Endothelial cell of umbilical vein (primary cell): ENCODE measurements at regions of chr6 and their contacts with region 1.

Region 1: DNA sequence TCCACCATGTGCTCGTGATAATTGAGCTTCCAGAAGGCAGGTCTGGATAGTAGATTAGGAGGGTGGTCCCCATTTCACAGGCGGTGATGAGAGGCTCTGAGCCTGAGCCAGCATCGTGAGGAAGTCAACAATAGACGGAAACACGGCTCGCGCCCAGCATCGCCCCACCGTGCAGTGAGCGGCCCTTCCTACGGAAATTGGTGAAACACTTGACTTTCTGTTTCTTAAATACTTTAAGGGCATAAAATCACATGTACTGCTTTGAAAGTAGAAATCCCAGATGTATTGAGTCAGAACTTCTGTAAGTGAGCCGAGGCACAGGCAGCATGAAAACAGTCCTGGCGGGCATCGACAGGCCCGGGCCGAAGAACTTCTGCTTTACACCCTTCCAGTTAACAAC is 4.3 kb upstream of the KIF25 start:
- DNase-seq: peak; percentile 86
- H3K4me3 ChIP-seq: no peak overlapping the region
- H3K27ac ChIP-seq: peak overlapping the region; percentile 45
- H3K4me1 ChIP-seq: peaks cover 13% of the 10 kb centered on the region
- H3K27me3 ChIP-seq: no peaks in the 10 kb centered on the region
- CTCF ChIP-seq: no peak
- POLR2A ChIP-seq: no peak

Region 2: DNA sequence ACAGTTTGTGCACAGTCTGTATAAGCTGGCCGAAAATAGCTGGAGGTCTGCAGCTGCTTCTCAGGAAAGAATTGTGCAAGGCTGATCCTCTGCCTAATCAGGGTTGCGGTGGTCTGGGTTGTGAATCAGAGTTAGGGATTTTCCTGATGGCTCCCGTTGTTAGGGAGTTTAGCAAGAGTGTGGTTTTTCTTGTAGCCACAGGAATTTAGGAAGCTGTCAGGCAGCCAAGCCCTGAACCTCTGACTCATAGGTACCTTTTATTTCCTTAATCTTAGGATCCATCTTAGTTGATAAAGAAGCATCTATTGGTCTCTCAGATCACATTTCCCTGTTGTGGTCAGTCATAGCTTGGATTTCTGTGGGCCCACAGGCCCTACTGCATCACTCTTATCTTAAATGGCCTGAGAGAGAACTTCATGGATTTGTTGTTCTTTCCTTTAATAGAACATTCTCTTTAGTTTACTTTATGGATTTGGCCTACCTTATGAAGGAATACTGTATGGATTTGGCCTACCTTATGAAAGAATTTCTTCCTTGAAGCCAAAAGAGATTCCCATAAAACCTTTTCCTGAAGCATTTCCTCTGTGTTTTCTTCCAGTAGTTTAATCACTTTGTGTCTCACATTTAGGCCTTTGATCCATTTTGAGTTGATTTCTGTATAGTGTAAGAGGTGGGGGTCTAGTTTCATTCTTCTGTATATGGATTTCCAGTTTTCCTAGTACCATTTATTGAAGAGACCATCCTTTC is 14.6 kb after region 1 on chr6:
- CTCF ChIA-PET with region 1: interaction called, 6 read pairs
- POLR2A ChIA-PET with region 1: no interaction called
- dilution Hi-C with region 1: no loop called
- intact Hi-C with region 1: loop called (anchors 1 kb)
- DNase-seq: peak; percentile 60
- H3K4me3 ChIP-seq: no peak overlapping the region
- H3K27ac ChIP-seq: peak overlapping the region; percentile 29
- H3K4me1 ChIP-seq: peaks cover 27% of the 10 kb centered on the region
- H3K27me3 ChIP-seq: no peaks in the 10 kb centered on the region
- CTCF ChIP-seq: no peak
- POLR2A ChIP-seq: no peak

Region 3: GRCh38 chr6:168035098-168035660 is 42.0 kb after region 1 on chr6:
- CTCF ChIA-PET with region 1: no interaction called
- POLR2A ChIA-PET with region 1: no interaction called
- dilution Hi-C with region 1: no loop called
- intact Hi-C with region 1: loop called (anchors 5 kb)
- DNase-seq: peak; percentile 36
- H3K4me3 ChIP-seq: peak overlapping the region in 2 of 3 experiments; percentile 10 to 27
- H3K27ac ChIP-seq: peak overlapping the region; percentile 50
- H3K4me1 ChIP-seq: peaks cover 25% of the 10 kb centered on the region
- H3K27me3 ChIP-seq: no peaks in the 10 kb centered on the region
- CTCF ChIP-seq: no peak
- POLR2A ChIP-seq: no peak

Region 4: DNA sequence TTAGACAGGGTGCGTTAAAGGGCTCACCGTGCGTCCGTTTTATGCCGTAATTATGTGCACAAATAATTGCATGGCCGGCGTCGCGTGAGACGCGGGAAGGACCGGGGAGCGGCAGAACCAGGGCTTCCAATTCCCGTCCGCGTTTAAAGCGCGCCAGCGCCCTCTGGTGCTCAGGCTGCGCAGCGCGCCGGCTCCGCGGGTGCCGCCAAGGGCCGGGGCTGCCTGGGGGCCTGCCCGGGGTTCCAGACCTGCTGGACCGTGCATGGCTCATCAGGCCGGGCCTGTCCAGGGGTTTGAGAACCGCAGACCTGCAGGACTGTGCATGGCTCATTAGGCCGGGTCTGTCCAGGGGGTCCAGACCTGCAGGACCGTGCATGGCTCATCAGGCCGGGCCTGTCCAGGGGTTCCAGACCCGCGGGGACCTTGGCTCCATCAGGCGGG is 891.5 kb after region 1 on chr6:
- CTCF ChIA-PET with region 1: no interaction called
- POLR2A ChIA-PET with region 1: no interaction called
- dilution Hi-C with region 1: no loop called
- intact Hi-C with region 1: no loop called
- DNase-seq: peak; percentile 4
- H3K4me3 ChIP-seq: no peak overlapping the region
- H3K27ac ChIP-seq: no peak overlapping the region
- H3K4me1 ChIP-seq: no peaks in the 10 kb centered on the region
- H3K27me3 ChIP-seq: no peaks in the 10 kb centered on the region
- CTCF ChIP-seq: peak; percentile 77 to 85
- POLR2A ChIP-seq: no peak